Dorsolateral prefrontal cortex (tissue), 120 donors: ENCODE measurements at regions of chr6 and their contacts with region 1.

Region 1: GRCh38 chr6:15615802-15616201 is 47.0 kb downstream of the DTNBP1 start:
- DNase-seq: no peak
- H3K4me3 ChIP-seq: no peak overlapping the region
- H3K27ac ChIP-seq: no peak overlapping the region
- H3K27me3 ChIP-seq: no peaks in the 10 kb centered on the region
- CTCF ChIP-seq: no peak

Region 2: DNA sequence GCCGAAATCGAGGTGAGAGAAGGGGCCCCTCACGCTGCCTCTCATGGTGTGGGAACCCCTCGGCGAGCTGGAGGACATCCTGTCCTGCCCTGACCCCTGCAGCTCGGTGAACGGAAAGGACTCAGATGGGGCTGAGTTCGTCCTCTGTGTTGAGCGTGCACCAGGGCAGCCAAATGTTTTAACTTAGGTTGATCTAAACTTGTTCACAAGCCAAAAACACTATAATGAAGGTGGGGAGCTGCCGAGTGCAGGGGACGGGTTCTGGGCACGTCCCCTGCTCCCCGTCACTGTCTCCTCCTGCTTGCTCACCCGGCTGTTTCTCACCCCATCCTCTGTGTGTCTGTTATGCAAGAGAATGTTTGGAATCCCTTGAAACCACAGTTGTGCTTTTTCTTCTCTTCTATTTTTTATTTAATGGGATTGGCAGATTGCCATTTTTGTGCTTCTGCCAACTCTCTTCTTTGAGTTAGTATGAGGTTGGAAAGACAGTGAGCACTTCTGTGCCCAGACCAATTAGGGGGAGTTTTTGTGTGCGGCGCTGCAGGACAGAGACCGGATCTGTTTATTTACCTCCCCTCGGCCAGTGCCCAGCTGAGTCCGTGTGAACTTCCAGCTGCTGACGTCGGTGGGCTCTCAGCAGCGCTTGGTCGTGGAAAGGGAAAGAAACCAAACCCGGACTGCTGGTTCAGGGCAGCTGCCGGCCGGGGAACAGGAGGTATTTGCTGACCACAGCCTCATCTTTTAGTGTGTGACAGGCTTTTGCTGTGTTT is 111.0 kb before region 1 on chr6:
- intact Hi-C with region 1: loop called (anchors 5 kb)
- DNase-seq: peak; percentile 35 to 80 (median 68)
- H3K4me3 ChIP-seq: peak overlapping the region in 48 of 59 donors; percentile 0 to 49 (median 27)
- H3K27ac ChIP-seq: peak overlapping the region in 57 of 59 donors; percentile 2 to 87 (median 68)
- H3K27me3 ChIP-seq: no peaks in the 10 kb centered on the region
- CTCF ChIP-seq: peak in 20 of 56 donors; percentile 1 to 40 (median 16)

Region 3: DNA sequence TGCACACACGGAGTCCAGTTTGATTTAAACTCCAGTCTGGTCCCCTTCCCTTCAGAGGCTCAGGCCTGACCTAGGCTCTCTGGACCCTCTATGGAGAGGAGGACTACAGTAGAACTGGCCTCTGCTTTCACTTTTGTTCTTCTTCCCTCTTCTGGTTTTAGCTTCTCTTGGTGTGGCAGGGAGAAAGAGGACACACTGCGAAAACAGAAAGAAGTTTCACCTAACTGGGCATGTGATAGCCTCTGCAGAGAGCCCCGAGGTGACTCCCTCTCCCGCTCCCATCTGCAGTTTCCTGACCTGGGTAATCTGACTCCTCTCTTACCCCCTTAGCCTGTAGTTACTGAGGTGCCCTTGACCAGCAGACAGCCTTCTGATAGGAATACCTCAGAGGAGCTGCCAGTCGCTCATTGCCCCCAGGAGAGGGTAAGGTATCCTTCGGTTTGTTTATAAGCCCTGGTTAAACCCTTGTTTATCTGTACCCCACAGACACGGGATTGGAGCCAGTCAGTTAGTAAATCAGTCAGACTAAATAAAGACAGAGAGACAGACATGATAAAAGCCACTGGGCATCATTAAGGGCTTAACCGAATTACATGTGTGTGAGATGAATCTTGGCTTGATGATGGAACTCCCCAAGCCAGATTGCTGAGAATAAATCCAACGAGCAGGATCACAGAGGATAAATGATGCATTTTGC is 59.0 kb after region 1 on chr6:
- intact Hi-C with region 1: no loop called
- DNase-seq: no peak
- H3K4me3 ChIP-seq: no peak overlapping the region
- H3K27ac ChIP-seq: no peak overlapping the region
- H3K27me3 ChIP-seq: peaks cover 0 to 17% (median 0%) of the 10 kb centered on the region in 45 donors
- CTCF ChIP-seq: no peak